ENCODE measurements at regions of chr10 and their contacts with region 1.

Region 1: GRCh38 chr10:36725581-36726520 is 399.5 kb upstream of the ANKRD30A start:
- DNase-seq: peak in 4 of 5 donors; percentile 52 to 82 (median 70)
- H3K4me3 ChIP-seq: no peak overlapping the region
- H3K27ac ChIP-seq: no peak overlapping the region
- H3K4me1 ChIP-seq: no peaks in the 10 kb centered on the region
- H3K27me3 ChIP-seq: no peaks in the 10 kb centered on the region
- CTCF ChIP-seq: no peak

Region 2: GRCh38 chr10:36621346-36621745 is 104.5 kb before region 1 on chr10:
- intact Hi-C with region 1: loop called (anchors 10 kb)
- DNase-seq: no peak
- H3K4me3 ChIP-seq: no peak overlapping the region
- H3K27ac ChIP-seq: no peak overlapping the region
- H3K4me1 ChIP-seq: no peaks in the 10 kb centered on the region
- H3K27me3 ChIP-seq: no peaks in the 10 kb centered on the region
- CTCF ChIP-seq: no peak

Measured in kidney (tissue), 22 donors.